ENCODE measurements at regions of chr1 and their contacts with region 1.

Region 1: DNA sequence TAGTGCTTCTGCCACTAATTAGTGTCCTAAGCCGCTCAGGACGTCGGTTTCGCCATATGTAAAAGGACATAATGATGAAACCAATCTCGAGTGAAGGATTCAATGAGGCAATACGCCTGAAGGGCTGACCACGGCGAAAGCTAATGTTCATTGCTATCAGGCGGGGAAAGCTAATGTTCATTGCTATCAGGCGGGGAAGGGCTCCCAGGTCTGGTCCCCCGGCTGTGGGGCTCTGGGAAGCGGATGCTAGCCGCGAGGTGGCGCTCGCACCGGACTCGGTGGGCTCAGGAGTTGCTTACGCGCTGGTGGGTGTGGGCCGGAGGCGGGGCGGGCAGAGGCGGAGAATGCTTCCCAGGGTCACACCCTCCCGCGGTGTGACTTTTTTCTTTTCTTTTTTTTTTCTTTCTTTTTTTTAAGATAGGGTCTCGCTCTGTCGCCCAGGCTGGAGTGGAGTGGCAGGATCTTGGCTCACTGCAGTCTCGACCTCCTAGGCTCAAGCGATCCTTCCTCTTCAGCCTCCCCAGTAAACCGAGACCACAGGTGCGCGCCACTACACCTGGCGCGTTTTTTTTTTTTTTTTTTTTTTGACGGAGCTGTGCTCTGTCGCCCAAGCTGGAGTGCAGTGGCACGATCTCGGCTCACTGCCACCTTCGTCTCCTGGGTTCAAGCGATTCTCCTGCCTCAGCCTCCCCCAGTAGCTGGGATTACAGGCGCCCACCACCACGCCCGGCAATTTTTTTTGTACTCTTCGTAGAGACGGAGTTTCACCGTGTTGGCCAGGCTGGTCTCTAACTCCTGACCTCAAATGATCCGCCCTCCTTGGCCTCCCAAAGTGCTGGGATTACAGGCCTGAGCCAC is 1.1 kb upstream of the PEAR1 start:
- DNase-seq: peak; percentile 96
- ATAC-seq: peak; percentile 90

Region 2: GRCh38 chr1:156489166-156489934 is 403.1 kb before region 1 on chr1:
- intact Hi-C with region 1: no loop called
- DNase-seq: peak; percentile 79
- ATAC-seq: peak; percentile 64

Region 3: GRCh38 chr1:156740307-156740678 is 152.1 kb before region 1 on chr1:
- intact Hi-C with region 1: no loop called
- DNase-seq: no peak
- ATAC-seq: no peak

Region 4: GRCh38 chr1:156927215-156928042 is 35.0 kb after region 1 on chr1:
- intact Hi-C with region 1: loop called (anchors 5 kb)
- DNase-seq: peak; percentile 83
- ATAC-seq: peak; percentile 70